ENCODE measurements at regions of chr20 and their contacts with region 1.

Region 1: DNA sequence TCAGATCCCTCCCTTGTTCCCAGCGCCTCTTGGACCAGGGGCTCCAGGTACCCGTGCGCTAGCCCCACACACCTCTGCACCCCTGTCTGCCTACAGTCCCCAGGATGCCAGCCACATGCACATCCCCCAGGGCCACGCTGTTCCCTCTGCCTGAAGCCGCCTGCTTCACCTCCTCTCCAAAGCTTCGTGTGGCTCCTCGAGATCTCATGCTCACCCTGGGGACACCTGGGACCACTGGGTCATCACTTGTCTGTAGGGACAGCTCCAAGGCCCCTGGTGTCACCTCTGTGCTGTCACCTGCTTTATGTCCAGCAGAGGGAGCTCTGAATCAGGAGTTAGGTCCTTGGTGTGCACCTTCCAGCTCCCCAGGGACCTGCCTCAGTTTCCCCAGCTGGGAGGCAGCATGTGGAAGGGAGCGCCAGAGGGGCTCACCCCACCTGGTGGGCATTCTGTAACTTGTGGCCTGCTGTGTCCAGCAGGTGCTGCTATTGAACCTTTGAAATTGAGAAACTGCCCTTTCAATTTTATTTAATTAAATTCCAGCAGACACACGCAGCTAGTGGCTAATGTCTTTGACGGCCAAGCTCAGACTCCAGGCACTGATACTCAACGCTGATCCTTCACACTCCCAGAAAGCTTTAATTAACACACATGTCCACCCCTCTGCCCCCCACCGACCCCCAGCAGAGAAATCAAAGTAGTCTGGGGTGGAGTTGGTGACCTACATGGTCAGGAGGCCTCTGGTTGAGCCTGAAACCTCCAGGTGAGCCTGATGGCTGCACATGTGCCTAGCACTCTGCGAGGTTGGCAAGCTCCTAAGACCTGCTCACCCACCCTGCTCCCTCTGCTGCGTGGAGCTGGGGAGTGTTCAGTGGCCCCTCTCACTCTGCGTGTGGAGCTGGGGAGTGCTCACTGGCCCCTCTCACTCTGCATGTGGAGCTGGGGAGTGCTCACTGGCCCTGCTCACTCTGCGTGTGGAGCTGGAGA is 7.6 kb upstream of the YTHDF1 start:
- DNase-seq: peak; percentile 48 to 62
- ATAC-seq: peak; percentile 46 to 66; a peak in 5 of 6 replicates
- H3K4me3 ChIP-seq: no peak overlapping the region
- H3K27ac ChIP-seq: peak overlapping the region; percentile 89 to 99
- H3K4me1 ChIP-seq: peaks cover 46% of the 10 kb centered on the region
- CTCF ChIP-seq: peak; percentile 95
- EP300 ChIP-seq: no peak
- POLR2A ChIP-seq: no peak
- RAD21 ChIP-seq: peak; percentile 95 to 97

Region 2: GRCh38 chr20:63056236-63056948 is 167.1 kb before region 1 on chr20:
- CTCF ChIA-PET with region 1: interaction called, 14 read pairs
- POLR2A ChIA-PET with region 1: no interaction called
- DNase-seq: peak in 1 of 2 experiments; percentile 53
- ATAC-seq: peak; percentile 49 to 81
- H3K4me3 ChIP-seq: no peak overlapping the region
- H3K27ac ChIP-seq: no peak overlapping the region
- H3K4me1 ChIP-seq: 0 out of 3 replicates have a peak, but pooled peaks cover 3% of the 10 kb centered on the region
- CTCF ChIP-seq: peak; percentile 71
- EP300 ChIP-seq: no peak
- POLR2A ChIP-seq: no peak
- RAD21 ChIP-seq: peak; percentile 68 to 83

Region 3: DNA sequence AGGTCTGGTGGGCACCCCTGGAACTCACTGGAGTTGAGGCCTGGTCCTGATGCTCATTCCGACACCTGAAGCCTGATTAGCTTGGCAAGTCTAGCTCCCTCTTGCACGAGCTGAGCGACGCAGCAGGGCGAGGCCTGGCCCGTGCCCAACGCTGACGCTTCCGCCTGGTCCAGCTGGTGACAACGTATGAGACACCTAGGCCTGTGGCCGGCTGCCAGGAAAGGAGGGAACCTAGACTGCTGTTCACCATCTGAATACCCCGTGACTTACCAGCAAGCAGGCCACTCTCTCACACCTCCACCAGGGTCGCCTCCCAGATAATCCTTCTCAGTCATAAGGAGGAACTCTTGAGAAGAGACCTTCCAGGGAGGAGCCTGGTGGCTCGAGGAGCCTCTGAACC is 32.1 kb before region 1 on chr20:
- CTCF ChIA-PET with region 1: interaction called, 29 read pairs
- POLR2A ChIA-PET with region 1: no interaction called
- DNase-seq: peak in 1 of 2 experiments; percentile 73
- ATAC-seq: peak; percentile 49 to 51; a peak in 5 of 6 replicates
- H3K4me3 ChIP-seq: no peak overlapping the region
- H3K27ac ChIP-seq: no peak overlapping the region
- H3K4me1 ChIP-seq: peaks cover 22% of the 10 kb centered on the region
- CTCF ChIP-seq: no peak
- EP300 ChIP-seq: no peak
- POLR2A ChIP-seq: no peak
- RAD21 ChIP-seq: no peak

Region 4: DNA sequence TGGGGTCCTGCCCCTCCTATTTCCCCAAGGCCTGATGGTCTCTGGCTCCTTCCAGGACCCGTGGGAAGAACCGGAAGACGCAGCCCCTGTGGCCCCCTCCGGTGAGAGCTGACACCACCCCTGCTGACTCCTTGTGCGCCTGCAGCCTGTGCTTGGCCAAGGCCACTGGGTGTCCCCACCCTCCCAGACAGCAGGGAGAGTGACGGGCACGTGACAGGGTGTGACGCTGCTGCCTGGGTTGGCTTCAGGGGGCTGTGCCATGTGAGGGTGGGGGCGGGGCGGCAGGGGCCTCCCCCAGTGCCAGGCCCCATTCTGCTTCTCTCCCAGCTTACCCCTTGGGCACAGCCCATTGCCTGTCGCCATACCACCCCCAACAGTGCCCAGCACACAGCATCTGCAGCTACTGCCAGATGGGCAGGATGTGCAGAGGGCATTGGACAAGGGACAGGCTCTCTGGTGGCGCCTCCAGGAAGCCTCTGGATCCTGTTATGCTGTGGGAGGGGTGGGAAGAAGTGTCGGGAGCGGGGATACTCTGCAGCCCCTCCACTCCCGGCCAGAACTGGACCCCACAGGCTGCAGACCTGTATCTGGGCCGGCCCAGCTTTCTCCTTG is 15.1 kb after region 1 on chr20:
- CTCF ChIA-PET with region 1: interaction called, 178 read pairs
- POLR2A ChIA-PET with region 1: interaction called, 14 read pairs
- DNase-seq: peak in 1 of 2 experiments; percentile 56
- ATAC-seq: peak; percentile 17 to 20; a peak in 2 of 6 replicates
- H3K4me3 ChIP-seq: no peak overlapping the region
- H3K27ac ChIP-seq: peak overlapping the region; percentile 96 to 99
- H3K4me1 ChIP-seq: peaks cover 72% of the 10 kb centered on the region
- CTCF ChIP-seq: 0 out of 3 replicates have a peak, but pooled peaks have one; percentile 5
- EP300 ChIP-seq: no peak
- POLR2A ChIP-seq: no peak
- RAD21 ChIP-seq: peak; percentile 28 to 33; a peak in 2 of 5 replicates

Region 5: DNA sequence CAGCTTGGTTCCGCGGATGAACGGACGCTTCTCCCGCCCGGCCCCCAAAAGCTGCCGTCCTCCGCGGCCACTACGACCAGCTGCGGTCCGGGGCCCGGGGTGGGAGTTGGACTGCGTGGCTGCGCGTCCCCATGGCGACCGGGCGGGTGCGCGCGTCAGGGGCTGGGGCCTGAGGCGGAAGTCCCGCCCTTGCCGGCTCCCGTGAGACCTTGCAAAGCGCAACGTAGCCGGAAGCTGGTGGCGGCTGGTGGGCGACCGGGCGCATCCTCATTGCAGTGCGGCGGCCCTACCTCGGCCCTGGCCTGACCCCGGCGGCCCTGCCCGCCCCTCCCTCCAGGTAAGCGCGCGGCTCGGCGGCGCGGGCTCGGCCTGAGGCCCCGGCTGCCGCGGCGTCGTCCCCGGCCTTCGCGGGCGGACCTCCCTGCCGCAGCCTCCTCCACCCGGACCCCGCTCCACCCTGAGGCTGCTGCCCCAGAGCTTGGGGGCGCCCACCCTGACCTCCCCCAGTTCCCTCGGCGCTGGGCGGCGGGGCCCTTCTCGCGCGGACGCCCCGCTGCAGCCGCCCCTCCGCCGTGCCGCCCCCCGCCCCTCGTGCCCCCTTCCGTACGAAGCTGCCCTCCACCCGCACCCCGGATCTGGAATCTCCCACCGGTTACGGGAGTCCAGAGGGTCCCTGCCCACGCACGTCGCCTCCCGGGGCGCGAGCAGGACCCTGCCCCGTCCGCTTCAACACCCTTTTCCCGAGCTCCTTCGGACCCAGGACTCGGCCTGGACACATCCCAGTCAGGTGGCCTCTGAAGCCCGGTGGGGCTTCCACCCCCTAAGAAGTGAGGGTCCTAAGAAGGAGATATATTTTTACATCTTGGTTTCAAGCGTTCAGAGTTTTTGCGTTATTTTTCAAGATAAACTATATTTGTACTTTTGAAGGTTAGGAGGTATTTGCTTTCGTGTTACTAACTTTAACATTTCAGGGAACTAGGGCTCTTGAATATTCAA is 49.4 kb after region 1 on chr20 and contains the start of gene ARFGAP1:
- CTCF ChIA-PET with region 1: interaction called, 401 read pairs
- POLR2A ChIA-PET with region 1: interaction called, 12 read pairs
- DNase-seq: peak; percentile 86 to 88
- ATAC-seq: peak; percentile 90 to 95
- H3K4me3 ChIP-seq: peak within 1 kb of the TSS; percentile 86
- H3K27ac ChIP-seq: peak within 1 kb of the TSS; percentile 86 to 98
- H3K4me1 ChIP-seq: peaks cover 23% of the 10 kb centered on the region; the same call in 2 of the 3 replicates
- CTCF ChIP-seq: no peak
- EP300 ChIP-seq: no peak
- POLR2A ChIP-seq: peak; percentile 78
- RAD21 ChIP-seq: no peak
- polyA plus RNA-seq, gene ARFGAP1: 41.0 and 43.5 TPM in 2 replicates

Region 6: DNA sequence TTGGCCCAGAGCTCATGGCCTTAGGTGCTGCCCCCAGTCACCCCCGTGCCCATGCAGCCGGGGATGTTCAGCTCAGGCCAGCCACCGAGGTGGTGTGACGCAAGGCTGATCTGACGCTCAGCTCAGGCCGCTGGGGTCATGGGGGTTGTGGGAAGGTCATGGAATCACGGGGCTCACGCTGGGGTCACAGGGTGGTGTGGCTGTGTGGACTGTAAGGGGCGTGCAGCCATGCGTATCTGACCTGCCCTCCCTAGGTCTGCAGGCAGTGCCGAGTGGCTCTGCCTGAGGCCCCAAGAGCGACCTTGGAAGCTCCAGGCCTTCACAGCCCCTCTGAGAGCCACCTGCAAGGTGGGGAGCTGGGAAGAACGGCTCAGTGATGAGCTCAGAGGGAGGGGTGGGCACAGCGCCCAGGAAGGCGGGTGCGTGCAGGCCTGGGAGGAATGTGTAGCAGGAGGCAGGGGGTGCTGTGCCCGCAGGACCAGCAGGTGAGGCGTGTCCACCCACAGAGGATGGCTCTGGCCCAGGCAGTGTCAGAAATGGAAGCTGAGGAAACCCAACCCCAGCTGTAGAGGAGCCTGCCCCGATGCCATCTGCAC is 109.8 kb after region 1 on chr20:
- CTCF ChIA-PET with region 1: interaction called, 11 read pairs
- POLR2A ChIA-PET with region 1: no interaction called
- DNase-seq: no peak
- ATAC-seq: no peak
- H3K4me3 ChIP-seq: no peak overlapping the region
- H3K27ac ChIP-seq: no peak overlapping the region
- H3K4me1 ChIP-seq: no peaks in the 10 kb centered on the region
- CTCF ChIP-seq: no peak
- EP300 ChIP-seq: no peak
- POLR2A ChIP-seq: no peak
- RAD21 ChIP-seq: no peak

Measured in A549 (cell line).